ENCODE measurements at regions of chr6 and their contacts with region 1.

Region 1: DNA sequence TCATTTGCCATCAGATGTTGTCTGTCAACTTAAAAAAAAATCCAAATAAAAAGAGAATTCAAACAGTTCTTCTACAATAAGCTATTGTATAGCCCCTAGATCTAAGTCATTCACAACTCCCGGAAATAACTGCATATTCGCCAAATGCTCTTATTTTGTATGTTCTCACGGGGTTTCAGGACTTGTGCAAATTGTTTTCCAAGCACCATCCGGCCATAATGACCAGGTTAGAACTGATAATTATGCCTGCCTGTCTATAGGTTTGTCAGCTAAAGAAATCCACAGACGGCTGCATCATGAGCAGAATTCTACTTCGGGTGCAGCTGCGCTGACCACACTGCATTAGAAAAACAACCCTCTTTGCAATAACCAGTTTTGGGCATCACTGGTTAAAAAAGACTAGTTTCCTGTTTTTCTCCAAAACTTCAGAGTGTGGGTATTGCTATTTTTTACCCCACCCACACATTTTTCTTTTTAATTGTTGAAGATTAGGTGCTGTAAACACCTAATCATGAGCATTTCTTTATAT is 87.7 kb downstream of the HIVEP2 start:
- DNase-seq: peak; percentile 61
- ATAC-seq: peak; percentile 67
- H3K4me3 ChIP-seq: peak overlapping the region; percentile 24 to 73 (median 52)
- H3K4me3 Mint-ChIP-seq: peak overlapping the region; percentile 83
- H3K27ac ChIP-seq: peak overlapping the region; percentile 83 to 84
- H3K27ac Mint-ChIP-seq: peak overlapping the region; percentile 94
- H3K4me1 ChIP-seq: peaks cover 69 to 77% of the 10 kb centered on the region in 2 donors
- H3K4me1 Mint-ChIP-seq: peaks cover 81% of the 10 kb centered on the region
- H3K27me3 ChIP-seq: no peaks in the 10 kb centered on the region
- H3K27me3 Mint-ChIP-seq: no peaks in the 10 kb centered on the region
- CTCF ChIP-seq: no peak

Region 2: GRCh38 chr6:142537612-142538478 is 319.5 kb before region 1 on chr6:
- CTCF ChIA-PET with region 1: no interaction called
- POLR2A ChIA-PET with region 1: no interaction called
- intact Hi-C with region 1: no loop called
- DNase-seq: no peak
- ATAC-seq: no peak
- H3K4me3 ChIP-seq: no peak overlapping the region
- H3K4me3 Mint-ChIP-seq: no peak overlapping the region
- H3K27ac ChIP-seq: no peak overlapping the region
- H3K27ac Mint-ChIP-seq: no peak overlapping the region
- H3K4me1 ChIP-seq: no peaks in the 10 kb centered on the region
- H3K4me1 Mint-ChIP-seq: no peaks in the 10 kb centered on the region
- H3K27me3 ChIP-seq: peaks cover 0 to 5% (median 0%) of the 10 kb centered on the region in 4 experiments
- H3K27me3 Mint-ChIP-seq: no peaks in the 10 kb centered on the region
- CTCF ChIP-seq: no peak

Region 3: GRCh38 chr6:142867988-142868812 is 10.9 kb after region 1 on chr6:
- CTCF ChIA-PET with region 1: interaction called, 6 read pairs
- POLR2A ChIA-PET with region 1: interaction called, 5 read pairs
- intact Hi-C with region 1: loop called (anchors 1 kb)
- DNase-seq: peak; percentile 47
- ATAC-seq: no peak
- H3K4me3 ChIP-seq: peak overlapping the region in 4 of 5 experiments; percentile 1 to 51 (median 16)
- H3K4me3 Mint-ChIP-seq: peak overlapping the region; percentile 76
- H3K27ac ChIP-seq: peak overlapping the region; percentile 21 to 64
- H3K27ac Mint-ChIP-seq: peak overlapping the region; percentile 67
- H3K4me1 ChIP-seq: peaks cover 41 to 65% of the 10 kb centered on the region in 2 donors
- H3K4me1 Mint-ChIP-seq: peaks cover 80% of the 10 kb centered on the region
- H3K27me3 ChIP-seq: no peaks in the 10 kb centered on the region
- H3K27me3 Mint-ChIP-seq: no peaks in the 10 kb centered on the region
- CTCF ChIP-seq: no peak

Region 4: DNA sequence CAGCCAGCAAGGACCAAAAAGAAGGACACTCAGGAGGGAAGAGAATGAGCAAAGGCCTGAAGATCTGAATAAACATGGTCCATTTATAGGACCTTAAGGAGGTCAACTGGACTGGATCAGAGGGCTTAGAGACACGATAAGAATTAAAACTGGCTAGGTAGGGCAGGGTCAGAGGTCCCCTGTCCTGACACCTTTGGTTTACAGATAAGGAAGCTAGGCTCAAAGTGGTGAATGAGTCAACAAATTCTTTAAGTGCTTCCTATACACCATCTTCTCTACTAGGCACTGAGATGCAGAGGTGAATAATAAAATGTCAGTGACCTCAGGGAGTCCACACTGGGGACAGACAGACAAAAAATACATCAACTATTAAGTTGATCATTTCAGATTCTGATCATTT is 17.4 kb after region 1 on chr6:
- CTCF ChIA-PET with region 1: interaction called, 4 read pairs
- POLR2A ChIA-PET with region 1: no interaction called
- intact Hi-C with region 1: loop called (anchors 1 kb)
- DNase-seq: no peak
- ATAC-seq: no peak
- H3K4me3 ChIP-seq: no peak overlapping the region
- H3K4me3 Mint-ChIP-seq: no peak overlapping the region
- H3K27ac ChIP-seq: peak overlapping the region in 1 of 2 donors; percentile 56
- H3K27ac Mint-ChIP-seq: peak overlapping the region; percentile 69
- H3K4me1 ChIP-seq: peaks cover 27 to 34% of the 10 kb centered on the region in 2 donors
- H3K4me1 Mint-ChIP-seq: peaks cover 67% of the 10 kb centered on the region
- H3K27me3 ChIP-seq: no peaks in the 10 kb centered on the region
- H3K27me3 Mint-ChIP-seq: no peaks in the 10 kb centered on the region
- CTCF ChIP-seq: no peak

Region 5: GRCh38 chr6:144158133-144158532 is 1300.8 kb after region 1 on chr6:
- CTCF ChIA-PET with region 1: no interaction called
- POLR2A ChIA-PET with region 1: no interaction called
- intact Hi-C with region 1: no loop called
- DNase-seq: no peak
- ATAC-seq: no peak
- H3K4me3 ChIP-seq: no peak overlapping the region
- H3K4me3 Mint-ChIP-seq: no peak overlapping the region
- H3K27ac ChIP-seq: no peak overlapping the region
- H3K27ac Mint-ChIP-seq: no peak overlapping the region
- H3K4me1 ChIP-seq: peaks cover 11 to 13% of the 10 kb centered on the region in 2 donors
- H3K4me1 Mint-ChIP-seq: peaks cover 43% of the 10 kb centered on the region
- H3K27me3 ChIP-seq: no peaks in the 10 kb centered on the region
- H3K27me3 Mint-ChIP-seq: no peaks in the 10 kb centered on the region
- CTCF ChIP-seq: no peak